A673 (cell line): ENCODE measurements at regions of chr15 and their contacts with region 1.

Region 1: GRCh38 chr15:71730277-71731144 is 79.8 kb upstream of the NR2E3 start:
- DNase-seq: peak; percentile 64
- H3K4me3 ChIP-seq: no peak overlapping the region
- H3K27ac ChIP-seq: no peak overlapping the region
- H3K4me1 ChIP-seq: no peaks in the 10 kb centered on the region
- H3K27me3 ChIP-seq: no peaks in the 10 kb centered on the region
- CTCF ChIP-seq: peak; percentile 85

Region 2: GRCh38 chr15:71448688-71449114 is 281.8 kb before region 1 on chr15:
- CTCF ChIA-PET with region 1: no interaction called
- POLR2A ChIA-PET with region 1: no interaction called
- intact Hi-C with region 1: loop called (anchors 2 kb)
- DNase-seq: peak; percentile 71
- H3K4me3 ChIP-seq: no peak overlapping the region
- H3K27ac ChIP-seq: no peak overlapping the region
- H3K4me1 ChIP-seq: no peaks in the 10 kb centered on the region
- H3K27me3 ChIP-seq: no peaks in the 10 kb centered on the region
- CTCF ChIP-seq: peak; percentile 81

Region 3: GRCh38 chr15:71532994-71533393 is 197.5 kb before region 1 on chr15:
- CTCF ChIA-PET with region 1: no interaction called
- POLR2A ChIA-PET with region 1: no interaction called
- intact Hi-C with region 1: loop called (anchors 5 kb)
- DNase-seq: peak; percentile 50
- H3K4me3 ChIP-seq: no peak overlapping the region
- H3K27ac ChIP-seq: no peak overlapping the region
- H3K4me1 ChIP-seq: no peaks in the 10 kb centered on the region
- H3K27me3 ChIP-seq: peaks cover 37% of the 10 kb centered on the region
- CTCF ChIP-seq: peak; percentile 80

Region 4: DNA sequence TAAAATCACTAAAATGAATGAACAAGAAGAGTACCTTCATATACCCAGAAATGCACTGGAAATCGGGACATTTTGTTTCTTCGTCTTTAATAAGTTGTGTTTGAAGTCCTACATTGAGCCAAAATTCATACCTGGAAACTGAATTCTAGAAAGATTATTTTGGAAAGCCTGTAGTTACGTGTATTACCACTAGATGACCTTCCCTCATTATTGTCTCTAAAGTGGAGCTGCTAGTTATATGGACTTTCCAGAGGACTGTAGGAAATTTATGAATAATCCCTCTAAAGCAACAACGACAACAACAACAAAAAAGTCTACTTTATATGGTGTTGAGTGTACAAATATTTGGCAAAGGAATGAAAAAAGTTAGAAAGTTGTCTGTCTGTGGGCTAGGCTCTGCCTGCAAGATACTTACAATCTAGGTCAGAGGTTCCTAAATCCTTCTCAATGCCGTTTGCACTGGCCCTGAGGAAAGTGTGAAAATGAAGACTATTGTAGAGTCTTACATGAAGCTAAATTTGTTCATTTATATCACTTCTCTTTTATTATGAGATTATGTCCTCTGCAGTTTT is 155.0 kb before region 1 on chr15:
- CTCF ChIA-PET with region 1: no interaction called
- POLR2A ChIA-PET with region 1: no interaction called
- intact Hi-C with region 1: loop called (anchors 10 kb)
- DNase-seq: peak; percentile 24
- H3K4me3 ChIP-seq: no peak overlapping the region
- H3K27ac ChIP-seq: no peak overlapping the region
- H3K4me1 ChIP-seq: no peaks in the 10 kb centered on the region
- H3K27me3 ChIP-seq: peaks cover 77% of the 10 kb centered on the region
- CTCF ChIP-seq: peak; percentile 61